IMR-90 (cell line): ENCODE measurements at regions of chr2 and their contacts with region 1.

Region 1: DNA sequence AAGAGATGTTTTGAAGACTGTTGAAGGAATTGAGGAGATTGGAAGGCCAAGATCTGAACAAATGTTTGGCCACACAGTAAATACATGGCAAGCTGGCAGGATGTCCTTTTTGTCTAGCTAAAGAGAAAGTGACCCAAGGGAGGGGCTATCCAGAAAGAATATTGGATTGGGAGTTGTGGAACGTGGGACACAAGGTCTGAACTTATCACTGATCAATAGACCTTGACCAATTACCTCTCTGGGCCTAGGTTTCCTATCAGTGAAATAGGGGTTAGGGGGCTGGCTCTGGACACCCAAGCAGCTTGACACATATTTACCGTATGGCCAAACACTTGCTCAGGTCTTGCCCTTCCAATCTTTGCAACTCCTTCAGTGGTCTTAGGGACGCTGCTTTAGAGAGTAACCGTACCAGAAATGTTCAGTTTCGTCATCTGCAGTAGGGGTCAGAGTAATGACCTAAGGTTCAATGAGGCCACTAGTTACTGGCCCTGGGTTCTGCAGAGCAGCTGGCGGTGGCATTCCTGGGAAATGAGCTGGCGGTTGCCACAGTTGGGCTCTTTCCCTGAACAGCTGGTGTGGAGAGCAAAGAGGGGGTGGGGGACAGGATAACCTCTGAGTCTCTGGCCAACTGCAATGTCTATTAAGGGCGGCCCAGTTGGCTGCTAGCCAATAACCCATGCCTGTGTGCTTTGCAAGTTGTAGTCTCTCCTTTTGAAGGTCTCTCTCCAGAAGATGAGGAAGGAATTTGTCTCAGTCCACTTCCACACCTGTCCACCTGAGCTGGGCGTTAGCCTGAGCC is 70.2 kb upstream of the STPG4 start:
- DNase-seq: peak; percentile 88
- ATAC-seq: peak; percentile 77
- H3K4me3 ChIP-seq: no peak overlapping the region
- H3K27ac ChIP-seq: peak overlapping the region; percentile 36
- H3K4me1 ChIP-seq: peaks cover 28% of the 10 kb centered on the region
- H3K27me3 ChIP-seq: no peaks in the 10 kb centered on the region
- CTCF ChIP-seq: no peak
- POLR2A ChIP-seq: no peak
- RAD21 ChIP-seq: no peak

Region 2: DNA sequence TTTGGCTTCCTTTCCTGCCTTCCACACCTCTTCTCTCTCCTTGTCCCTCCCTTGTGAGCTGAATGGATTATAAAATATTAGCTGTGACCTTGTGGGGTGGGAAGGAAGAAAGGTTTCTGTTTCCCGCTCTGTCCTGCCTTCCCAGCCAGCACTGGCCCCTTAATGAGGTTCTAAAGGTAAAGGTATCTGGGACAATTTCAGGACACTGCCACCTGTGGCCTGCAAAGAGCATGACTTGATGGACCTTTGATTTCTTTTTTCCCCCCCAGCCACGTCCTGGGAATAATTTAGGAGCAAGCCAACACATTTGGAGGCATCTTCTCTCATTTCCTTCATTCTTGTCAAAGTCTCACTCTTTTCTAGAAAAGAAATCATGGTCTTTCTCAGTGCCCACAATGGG is 1174.8 kb before region 1 on chr2:
- CTCF ChIA-PET with region 1: no interaction called
- POLR2A ChIA-PET with region 1: no interaction called
- dilution Hi-C with region 1: no loop called
- in situ Hi-C with region 1: no loop called
- intact Hi-C with region 1: no loop called
- DNase-seq: no peak
- ATAC-seq: no peak
- H3K4me3 ChIP-seq: no peak overlapping the region
- H3K27ac ChIP-seq: no peak overlapping the region
- H3K4me1 ChIP-seq: no peaks in the 10 kb centered on the region
- H3K27me3 ChIP-seq: no peaks in the 10 kb centered on the region
- CTCF ChIP-seq: no peak
- POLR2A ChIP-seq: no peak
- RAD21 ChIP-seq: no peak

Region 3: GRCh38 chr2:46979571-46979979 is 245.7 kb before region 1 on chr2:
- CTCF ChIA-PET with region 1: no interaction called
- POLR2A ChIA-PET with region 1: no interaction called
- dilution Hi-C with region 1: no loop called
- in situ Hi-C with region 1: no loop called
- intact Hi-C with region 1: no loop called
- DNase-seq: no peak
- ATAC-seq: no peak
- H3K4me3 ChIP-seq: no peak overlapping the region
- H3K27ac ChIP-seq: no peak overlapping the region
- H3K4me1 ChIP-seq: peaks cover 11% of the 10 kb centered on the region
- H3K27me3 ChIP-seq: no peaks in the 10 kb centered on the region
- CTCF ChIP-seq: no peak
- POLR2A ChIP-seq: no peak
- RAD21 ChIP-seq: no peak

Region 4: DNA sequence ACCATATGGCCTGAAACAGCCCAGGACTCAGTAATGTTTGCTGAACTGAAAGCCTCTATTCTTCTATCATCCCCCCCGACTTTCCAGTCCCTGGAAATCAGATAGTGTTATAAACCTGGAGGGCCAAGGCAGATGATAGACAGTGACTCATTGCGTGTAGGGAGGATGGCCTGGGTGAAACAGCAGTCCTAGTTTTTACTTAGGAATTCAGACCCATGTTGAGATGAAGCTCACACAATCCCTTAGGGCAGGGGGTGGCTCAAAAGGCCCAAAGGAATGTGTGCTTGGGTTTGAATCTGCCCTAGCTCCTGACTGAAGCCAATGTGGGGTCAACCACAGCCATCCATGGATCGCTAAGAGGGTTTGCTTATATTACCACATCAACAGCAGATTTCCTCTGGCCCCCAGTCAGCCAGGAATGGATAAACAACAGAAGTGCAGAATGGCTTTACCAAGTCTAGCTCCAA is 26.2 kb before region 1 on chr2:
- CTCF ChIA-PET with region 1: no interaction called
- POLR2A ChIA-PET with region 1: interaction called, 5 read pairs
- dilution Hi-C with region 1: no loop called
- in situ Hi-C with region 1: no loop called
- intact Hi-C with region 1: loop called (anchors 2 kb)
- DNase-seq: peak; percentile 100
- ATAC-seq: peak; percentile 98
- H3K4me3 ChIP-seq: no peak overlapping the region
- H3K27ac ChIP-seq: peak overlapping the region; percentile 89
- H3K4me1 ChIP-seq: peaks cover 22% of the 10 kb centered on the region
- H3K27me3 ChIP-seq: no peaks in the 10 kb centered on the region
- CTCF ChIP-seq: no peak
- POLR2A ChIP-seq: no peak
- RAD21 ChIP-seq: peak; percentile 30

Region 5: DNA sequence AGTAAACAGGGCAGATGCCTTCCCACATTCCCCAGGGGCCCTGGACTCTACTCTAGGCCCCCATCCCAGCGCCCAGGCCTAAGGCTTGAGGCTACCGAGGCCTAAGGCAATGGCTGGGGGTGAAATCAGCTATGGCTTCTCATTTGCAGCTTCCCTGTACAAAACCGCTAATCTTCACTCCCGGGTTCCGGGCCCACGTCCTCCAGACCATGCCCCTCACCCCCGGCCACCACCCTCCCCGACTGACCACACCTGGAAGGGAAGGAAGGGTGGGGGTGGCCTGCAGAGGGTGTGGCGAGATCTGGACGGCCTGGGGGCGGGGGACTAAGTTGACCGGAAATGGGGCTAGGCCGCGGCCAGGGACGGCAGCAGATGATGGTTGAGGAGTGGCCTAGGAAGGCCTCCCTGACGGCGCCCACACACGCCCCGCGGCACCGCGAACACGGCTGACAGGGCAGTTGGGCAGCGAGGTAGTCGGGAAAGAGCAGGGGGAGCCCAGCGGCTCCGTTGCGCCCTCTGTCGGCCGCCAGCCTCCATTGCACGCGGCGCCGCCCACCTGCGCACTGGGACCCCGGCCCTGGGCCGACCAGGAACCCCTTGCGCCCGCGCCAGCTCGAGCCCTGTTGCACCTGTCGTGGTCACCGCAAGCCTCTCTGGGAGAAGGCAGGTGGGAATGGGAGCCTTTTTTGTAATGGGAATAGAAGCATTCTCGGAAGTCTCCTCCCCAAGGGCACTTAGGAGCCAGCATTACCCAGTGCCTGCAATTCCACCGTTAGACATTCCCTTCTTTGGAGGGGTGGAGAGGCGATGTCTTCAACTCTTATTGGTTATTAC is 47.0 kb after region 1 on chr2:
- CTCF ChIA-PET with region 1: interaction called, 3 read pairs
- POLR2A ChIA-PET with region 1: no interaction called
- dilution Hi-C with region 1: no loop called
- in situ Hi-C with region 1: no loop called
- intact Hi-C with region 1: loop called (anchors 2 kb)
- DNase-seq: peak; percentile 39
- ATAC-seq: peak; percentile 31
- H3K4me3 ChIP-seq: no peak overlapping the region
- H3K27ac ChIP-seq: no peak overlapping the region; the same call in 1 of the 2 replicates
- H3K4me1 ChIP-seq: peaks cover 17% of the 10 kb centered on the region
- H3K27me3 ChIP-seq: no peaks in the 10 kb centered on the region
- CTCF ChIP-seq: peak; percentile 75
- POLR2A ChIP-seq: no peak
- RAD21 ChIP-seq: peak; percentile 79

Region 6: GRCh38 chr2:47373747-47374146 is 148.5 kb after region 1 on chr2:
- CTCF ChIA-PET with region 1: no interaction called
- POLR2A ChIA-PET with region 1: no interaction called
- dilution Hi-C with region 1: no loop called
- in situ Hi-C with region 1: no loop called
- intact Hi-C with region 1: no loop called
- DNase-seq: no peak
- ATAC-seq: no peak
- H3K4me3 ChIP-seq: no peak overlapping the region
- H3K27ac ChIP-seq: no peak overlapping the region
- H3K4me1 ChIP-seq: no peaks in the 10 kb centered on the region
- H3K27me3 ChIP-seq: peaks cover 17% of the 10 kb centered on the region
- CTCF ChIP-seq: no peak
- POLR2A ChIP-seq: no peak
- RAD21 ChIP-seq: no peak

Region 7: DNA sequence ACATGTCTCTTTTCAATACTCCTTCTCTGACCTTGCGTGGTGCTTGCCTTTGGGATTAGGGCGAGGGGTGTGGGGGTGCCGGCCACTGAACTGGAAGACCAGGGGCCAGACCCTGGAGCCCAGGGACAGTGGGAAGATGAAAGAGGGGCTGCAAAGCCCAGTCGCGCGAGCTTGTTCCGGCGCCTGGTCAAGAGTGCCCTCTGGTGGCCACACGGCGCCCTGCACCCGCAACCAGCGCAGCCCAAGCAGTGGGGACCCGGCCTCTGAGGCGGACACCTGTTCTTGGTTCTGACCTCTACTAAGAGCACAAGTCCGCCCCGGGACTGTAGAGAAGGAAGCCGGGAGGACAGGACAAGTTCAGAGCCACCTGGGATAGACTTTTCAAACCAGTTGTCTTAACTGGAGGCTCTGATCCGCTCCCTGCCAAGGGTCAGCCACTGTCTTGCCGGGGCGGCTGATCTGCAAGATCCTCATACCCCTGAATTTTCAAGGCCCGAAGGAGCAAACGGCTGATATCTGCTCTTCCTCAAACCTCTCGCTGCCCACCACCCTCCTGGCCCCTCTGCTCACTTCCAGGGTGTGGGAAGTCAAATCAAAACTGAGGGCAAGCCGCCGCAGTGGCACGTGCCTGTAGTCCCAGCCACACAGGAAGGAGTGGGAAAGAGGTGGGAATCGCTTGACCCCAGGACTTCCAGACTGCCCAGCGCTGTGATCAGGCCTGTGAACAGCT is 542.8 kb after region 1 on chr2:
- CTCF ChIA-PET with region 1: no interaction called
- POLR2A ChIA-PET with region 1: no interaction called
- dilution Hi-C with region 1: no loop called
- in situ Hi-C with region 1: no loop called
- intact Hi-C with region 1: no loop called
- DNase-seq: peak; percentile 30
- ATAC-seq: peak; percentile 91
- H3K4me3 ChIP-seq: peak overlapping the region; percentile 49; the same call in 1 of the 2 replicates
- H3K27ac ChIP-seq: no peak overlapping the region
- H3K4me1 ChIP-seq: peaks cover 2% of the 10 kb centered on the region; the same call in 1 of the 2 replicates
- H3K27me3 ChIP-seq: peaks cover 8% of the 10 kb centered on the region; the same call in 1 of the 2 replicates
- CTCF ChIP-seq: peak; percentile 92
- POLR2A ChIP-seq: 0 out of 2 replicates have a peak, but pooled peaks have one; percentile 29
- RAD21 ChIP-seq: peak; percentile 95